ENCODE measurements at regions of chr9 and their contacts with region 1.

Region 1: GRCh38 chr9:99030092-99030511 is 74.8 kb upstream of the TGFBR1 start:
- DNase-seq: peak; percentile 96
- H3K4me3 ChIP-seq: no peak overlapping the region
- H3K27ac ChIP-seq: peak overlapping the region; percentile 92
- H3K27me3 ChIP-seq: no peaks in the 10 kb centered on the region
- CTCF ChIP-seq: no peak

Region 2: DNA sequence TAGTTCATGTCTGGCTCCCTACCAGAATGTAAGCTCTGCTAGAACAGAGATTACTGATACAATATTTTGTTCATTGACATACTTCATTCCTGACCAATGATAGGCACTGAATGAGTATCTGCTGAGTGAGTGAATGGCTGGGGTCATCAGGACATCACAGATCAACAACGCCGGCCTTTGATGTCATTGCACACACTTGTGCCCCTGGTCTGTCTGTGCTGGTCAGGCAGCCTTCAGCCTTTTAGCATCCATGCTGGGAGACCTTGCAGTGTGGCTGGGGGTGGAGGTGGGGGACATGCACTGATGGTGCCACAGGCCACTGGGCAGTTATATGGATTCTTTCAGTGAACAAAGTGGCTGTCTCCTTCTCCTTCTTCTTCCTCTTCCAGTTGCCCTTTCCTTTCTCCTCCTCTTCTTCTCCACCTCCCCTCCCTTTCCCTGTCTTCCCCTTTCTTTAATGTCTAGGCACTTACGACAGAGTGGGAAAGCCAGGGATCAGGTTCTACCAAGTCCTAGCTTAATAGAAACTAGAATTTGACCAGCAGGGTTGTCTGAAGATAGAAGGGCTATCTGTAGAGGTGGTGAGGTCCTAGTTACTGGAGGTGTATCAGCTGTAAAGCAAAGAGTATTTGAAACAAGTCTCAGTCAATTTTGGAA is 23.7 kb before region 1 on chr9:
- CTCF ChIA-PET with region 1: no interaction called
- POLR2A ChIA-PET with region 1: no interaction called
- DNase-seq: no peak
- H3K4me3 ChIP-seq: no peak overlapping the region
- H3K27ac ChIP-seq: no peak overlapping the region
- H3K27me3 ChIP-seq: peaks cover 12% of the 10 kb centered on the region
- CTCF ChIP-seq: no peak

Region 3: DNA sequence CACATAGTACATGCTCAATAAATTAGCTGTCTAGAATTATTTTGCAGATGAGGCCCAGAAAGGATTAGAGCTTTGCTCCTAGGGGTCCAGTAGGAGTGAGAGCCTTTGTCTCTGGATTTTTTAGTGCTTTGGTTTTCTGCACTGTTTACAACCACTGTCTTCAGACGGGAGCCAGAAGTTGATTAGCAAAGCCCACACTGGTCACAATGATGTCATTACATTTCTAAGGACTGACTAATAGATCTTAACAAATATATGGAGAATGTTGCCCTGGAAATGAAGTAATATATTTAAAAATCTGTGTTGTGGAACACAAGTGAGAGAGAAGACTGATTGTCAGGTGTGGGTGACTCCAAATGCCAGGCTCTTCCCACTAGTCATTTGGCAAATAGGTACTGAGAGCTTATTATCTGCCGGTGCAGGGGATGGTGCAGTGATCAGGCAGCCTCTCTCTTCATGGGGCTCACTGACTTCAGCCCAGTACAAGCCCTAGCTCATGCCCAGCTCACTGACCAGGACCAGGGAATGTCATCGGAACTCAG is 10.2 kb before region 1 on chr9:
- CTCF ChIA-PET with region 1: no interaction called
- POLR2A ChIA-PET with region 1: interaction called, 26 read pairs
- DNase-seq: peak; percentile 94
- H3K4me3 ChIP-seq: no peak overlapping the region
- H3K27ac ChIP-seq: peak overlapping the region; percentile 99
- H3K27me3 ChIP-seq: no peaks in the 10 kb centered on the region
- CTCF ChIP-seq: no peak

Region 4: DNA sequence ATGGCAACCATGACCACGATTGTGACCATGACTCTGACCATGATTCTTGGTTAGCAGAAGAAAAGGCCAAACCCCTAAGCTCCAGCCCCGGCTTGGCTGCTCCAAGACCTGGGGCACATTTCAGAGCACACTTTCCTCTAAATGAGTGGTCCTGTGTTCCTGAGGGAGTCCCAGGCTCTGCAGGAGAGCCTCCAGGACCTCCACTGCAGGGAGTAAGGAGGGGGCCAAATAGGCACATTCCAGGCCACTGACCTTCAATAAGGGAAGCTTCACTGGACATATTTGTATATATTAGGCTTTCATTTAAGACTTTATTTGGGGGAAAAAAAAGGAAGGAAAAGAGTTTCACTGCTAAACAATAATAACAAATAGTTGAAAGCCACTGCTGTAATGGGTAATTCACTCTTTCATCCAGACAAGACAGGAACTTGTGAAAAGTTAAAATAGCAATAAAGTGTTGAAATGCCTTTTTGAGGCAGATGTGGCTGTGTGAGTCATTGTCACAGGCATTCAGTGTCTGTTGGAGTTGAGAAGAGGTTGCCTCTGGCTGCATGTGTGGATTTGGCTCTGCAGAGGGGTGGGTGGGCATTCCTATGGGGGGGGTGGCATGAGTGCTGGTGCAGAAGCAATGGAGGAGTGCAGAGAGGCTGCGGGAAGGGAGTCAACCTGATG is 10.9 kb after region 1 on chr9:
- CTCF ChIA-PET with region 1: no interaction called
- POLR2A ChIA-PET with region 1: interaction called, 12 read pairs
- DNase-seq: peak; percentile 52
- H3K4me3 ChIP-seq: no peak overlapping the region
- H3K27ac ChIP-seq: peak overlapping the region; percentile 73
- H3K27me3 ChIP-seq: peaks cover 7% of the 10 kb centered on the region
- CTCF ChIP-seq: no peak

Region 5: DNA sequence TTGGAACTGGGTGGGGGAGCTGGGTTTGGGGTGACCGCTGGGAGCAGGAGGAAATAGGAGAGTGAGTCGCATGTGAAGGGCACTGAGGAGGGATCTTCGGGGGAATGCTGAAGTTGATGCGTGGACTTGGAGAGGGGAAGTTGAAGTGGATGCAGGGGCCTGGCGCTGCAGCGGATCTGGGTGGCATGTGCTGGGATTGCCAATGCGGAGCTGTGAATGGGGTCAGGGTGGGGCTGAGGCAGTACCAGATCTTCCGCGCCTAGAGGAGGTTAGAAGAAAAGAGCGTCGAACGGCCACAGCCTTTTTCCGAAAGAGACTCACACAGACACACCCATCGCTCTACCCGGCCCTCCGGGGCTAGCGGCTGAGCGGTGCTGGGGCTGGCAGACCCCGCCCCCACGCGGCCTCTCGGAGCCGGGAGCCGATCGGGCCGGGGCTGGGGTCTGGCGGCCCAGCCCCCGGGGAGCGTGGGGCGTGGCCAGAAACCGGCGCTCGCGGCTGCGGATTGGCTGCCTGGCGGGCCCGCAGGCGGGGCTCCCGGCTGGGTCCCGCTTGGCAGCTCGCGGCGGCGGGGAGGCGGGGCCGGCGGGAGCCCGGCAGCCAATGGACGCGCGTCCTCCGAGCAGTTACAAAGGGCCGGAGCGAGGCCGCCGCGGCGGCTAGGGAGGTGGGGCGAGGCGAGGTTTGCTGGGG is 74.5 kb after region 1 on chr9 and contains the start of gene TGFBR1:
- CTCF ChIA-PET with region 1: no interaction called
- POLR2A ChIA-PET with region 1: interaction called, 13 read pairs
- DNase-seq: no peak
- H3K4me3 ChIP-seq: peak within 1 kb of the TSS; percentile 73
- H3K27ac ChIP-seq: peak within 1 kb of the TSS; percentile 89
- H3K27me3 ChIP-seq: no peaks in the 10 kb centered on the region
- CTCF ChIP-seq: 0 out of 2 replicates have a peak, but pooled peaks have one; percentile 5
- polyA plus RNA-seq, gene TGFBR1: 86.3 and 96.6 TPM in 2 replicates

Measured in AG04450 (cell line).